ENCODE measurements at regions of chr9 and their contacts with region 1.

Region 1: GRCh38 chr9:68869022-68869421 is 144.9 kb downstream of the PRKACG start:
- DNase-seq: no peak
- ATAC-seq: peak; percentile 63

Region 2: GRCh38 chr9:68714416-68715180 is 154.4 kb before region 1 on chr9:
- intact Hi-C with region 1: loop called (anchors 10 kb)
- DNase-seq: no peak
- ATAC-seq: no peak

Region 3: DNA sequence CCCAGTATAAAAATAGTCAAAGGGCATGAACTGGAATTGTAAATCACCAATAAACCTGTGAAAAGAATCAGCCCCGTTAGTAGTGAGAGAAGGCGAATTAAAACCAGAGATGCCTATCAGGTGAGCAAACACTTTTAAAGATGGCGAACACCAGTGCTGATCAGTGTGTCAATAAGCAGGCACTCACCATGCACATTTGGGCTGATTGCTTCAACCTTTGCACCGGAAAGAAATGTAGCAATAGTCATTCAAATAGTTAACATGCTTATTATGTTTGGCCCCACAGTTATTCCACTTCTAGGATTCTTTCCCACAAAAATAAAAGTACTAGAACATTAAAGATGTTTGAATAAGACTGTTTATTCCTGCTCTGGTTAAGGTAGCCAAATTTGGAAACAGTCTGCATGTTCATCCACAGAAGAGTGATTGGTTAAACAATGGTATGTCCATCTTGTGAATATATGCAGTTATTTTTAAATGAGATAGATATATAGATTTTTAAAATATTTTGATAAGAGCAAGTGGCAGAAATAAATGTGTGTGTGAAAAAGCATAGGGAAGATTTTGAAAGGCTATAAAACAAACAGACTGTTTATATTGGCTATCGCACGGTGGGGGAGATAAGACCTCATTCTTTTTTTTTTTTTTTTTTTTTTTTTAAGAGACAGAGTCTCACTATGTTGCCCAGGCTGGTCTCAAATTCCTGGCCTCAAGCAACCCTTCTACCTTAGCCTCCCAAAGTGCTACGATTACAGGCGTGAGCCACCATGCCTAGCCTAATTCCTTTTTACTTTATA is 51.7 kb before region 1 on chr9:
- intact Hi-C with region 1: no loop called
- DNase-seq: no peak
- ATAC-seq: no peak

Region 4: GRCh38 chr9:68832853-68833518 is 36.0 kb before region 1 on chr9:
- intact Hi-C with region 1: no loop called
- DNase-seq: no peak
- ATAC-seq: no peak

Region 5: DNA sequence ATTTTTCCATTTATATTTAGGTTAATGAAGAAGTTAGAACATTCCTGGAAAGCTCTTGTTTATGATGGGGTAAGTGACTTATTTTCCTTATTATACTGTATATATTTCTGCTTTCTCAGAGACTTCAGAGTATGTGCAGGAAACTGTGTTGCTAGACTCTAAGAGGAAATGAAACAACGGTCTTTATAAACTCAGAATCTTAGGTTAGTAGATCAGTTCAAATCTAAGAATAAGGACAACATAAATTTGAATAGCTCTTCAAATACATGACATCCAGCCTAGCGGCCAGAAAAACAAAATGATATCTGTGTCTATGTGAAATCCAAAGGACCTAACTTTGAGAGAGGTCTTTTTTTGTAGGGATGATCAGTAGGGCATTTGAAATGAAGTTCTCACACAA is 50.6 kb after region 1 on chr9:
- intact Hi-C with region 1: loop called (anchors 10 kb)
- DNase-seq: no peak
- ATAC-seq: no peak

Region 6: GRCh38 chr9:69532396-69532795 is 663.4 kb after region 1 on chr9:
- intact Hi-C with region 1: no loop called
- DNase-seq: no peak
- ATAC-seq: no peak